K562 (cell line): ENCODE measurements at regions of chr5 and their contacts with region 1.

Region 1: GRCh38 chr5:54243473-54244080 is 66.8 kb downstream of the ARL15 start:
- DNase-seq: peak; percentile 29 to 54 (median 33)
- ATAC-seq: peak; percentile 66
- H3K4me3 ChIP-seq: no peak overlapping the region
- H3K27ac ChIP-seq: no peak overlapping the region
- H3K4me1 ChIP-seq: peaks cover 0 to 6% of the 10 kb centered on the region in 2 experiments; a peak in 3 of 5 replicates
- H3K27me3 ChIP-seq: no peaks in the 10 kb centered on the region
- CTCF ChIP-seq: peak; percentile 24 to 65 (median 57); a peak in 5 of 6 replicates
- EP300 ChIP-seq: no peak
- POLR2A ChIP-seq: no peak
- RAD21 ChIP-seq: peak; percentile 56 to 68

Region 2: GRCh38 chr5:54421976-54422375 is 178.4 kb after region 1 on chr5:
- CTCF ChIA-PET with region 1: interaction called, 8 read pairs
- POLR2A ChIA-PET with region 1: no interaction called
- in situ Hi-C with region 1: no loop called
- intact Hi-C with region 1: loop called (anchors 5 kb)
- DNase-seq: no peak
- ATAC-seq: no peak
- H3K4me3 ChIP-seq: no peak overlapping the region
- H3K27ac ChIP-seq: no peak overlapping the region
- H3K4me1 ChIP-seq: peaks cover 0 to 4% of the 10 kb centered on the region in 2 experiments; a peak in 1 of 5 replicates
- H3K27me3 ChIP-seq: no peaks in the 10 kb centered on the region
- CTCF ChIP-seq: no peak
- EP300 ChIP-seq: no peak
- POLR2A ChIP-seq: no peak
- RAD21 ChIP-seq: no peak

Region 3: DNA sequence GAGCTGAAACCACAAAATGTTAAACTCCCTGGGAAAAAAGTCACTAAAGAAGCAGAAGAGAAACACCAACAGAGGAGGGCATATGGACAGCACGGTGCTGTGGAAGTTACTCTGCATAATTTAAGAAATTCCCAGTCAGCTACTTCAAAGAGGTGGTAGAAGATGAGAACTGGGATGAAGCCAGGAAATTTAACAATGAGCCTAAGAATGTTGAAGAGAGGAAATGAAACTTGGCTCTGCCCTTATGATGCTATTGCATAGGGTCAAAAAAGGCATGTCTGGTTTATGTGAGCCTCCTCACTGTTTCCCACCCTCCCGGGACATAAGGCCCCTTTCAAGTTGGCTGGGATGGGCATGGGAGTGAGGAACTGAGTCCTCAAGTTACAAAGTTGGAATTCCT is 248.6 kb after region 1 on chr5:
- CTCF ChIA-PET with region 1: interaction called, 8 read pairs
- POLR2A ChIA-PET with region 1: interaction called, 6 read pairs
- in situ Hi-C with region 1: no loop called
- intact Hi-C with region 1: loop called (anchors 1 kb)
- DNase-seq: no peak
- ATAC-seq: no peak
- H3K4me3 ChIP-seq: no peak overlapping the region
- H3K27ac ChIP-seq: no peak overlapping the region
- H3K4me1 ChIP-seq: 0 out of 5 replicates have a peak, but pooled peaks cover 0 to 2% of the 10 kb centered on the region in 2 experiments
- H3K27me3 ChIP-seq: no peaks in the 10 kb centered on the region
- CTCF ChIP-seq: no peak
- EP300 ChIP-seq: no peak
- POLR2A ChIP-seq: no peak
- RAD21 ChIP-seq: no peak

Region 4: DNA sequence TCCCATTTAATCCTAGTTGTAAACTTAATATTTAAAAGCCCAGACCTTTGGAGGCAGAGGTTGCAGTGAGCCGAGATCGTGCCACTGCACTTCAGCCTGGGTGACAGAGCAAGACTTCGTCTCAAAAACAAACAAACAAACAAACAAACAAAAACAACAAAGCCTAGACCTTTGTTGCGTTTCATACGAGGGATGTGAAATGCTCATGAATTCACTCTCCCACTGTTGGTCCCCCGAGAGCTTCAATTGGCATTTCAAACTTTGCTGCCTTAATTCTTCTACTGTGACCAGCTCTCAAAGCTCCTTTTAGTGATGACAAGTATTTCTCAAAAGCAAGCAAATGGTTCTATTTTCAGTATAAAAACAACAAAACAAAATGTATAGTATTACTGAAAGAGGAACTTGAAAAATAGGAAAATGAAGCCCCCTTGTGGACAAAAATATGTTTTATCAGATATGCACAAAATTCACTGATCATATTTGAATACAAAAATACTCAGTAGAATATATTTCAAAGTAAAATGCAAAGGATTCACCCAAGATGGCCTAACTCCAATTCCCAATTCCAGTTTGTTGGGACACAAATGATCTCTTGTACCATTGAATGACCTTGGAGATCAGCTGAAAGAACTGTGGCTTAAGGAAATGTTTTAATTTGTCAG is 601.5 kb after region 1 on chr5:
- CTCF ChIA-PET with region 1: interaction called, 4 read pairs
- POLR2A ChIA-PET with region 1: no interaction called
- in situ Hi-C with region 1: loop called (anchors 25 kb)
- intact Hi-C with region 1: loop called (anchors 10 kb)
- DNase-seq: peak in 2 of 4 experiments; percentile 11 to 53
- ATAC-seq: peak; percentile 61; the same call in 1 of the 3 replicates
- H3K4me3 ChIP-seq: no peak overlapping the region
- H3K27ac ChIP-seq: no peak overlapping the region
- H3K4me1 ChIP-seq: no peaks in the 10 kb centered on the region; a peak in 1 of 5 replicates
- H3K27me3 ChIP-seq: peaks cover 0 to 7% of the 10 kb centered on the region in 2 experiments; a peak in 1 of 5 replicates
- CTCF ChIP-seq: peak; percentile 32 to 74 (median 46); a peak in 4 of 6 replicates
- EP300 ChIP-seq: no peak
- POLR2A ChIP-seq: no peak
- RAD21 ChIP-seq: peak; percentile 84 to 91